ENCODE measurements at regions of chr6 and their contacts with region 1.

Region 1: GRCh38 chr6:46090115-46091079 is 39.4 kb upstream of the ENPP4 start:
- DNase-seq: peak; percentile 50
- ATAC-seq: peak; percentile 67
- H3K4me3 Mint-ChIP-seq: no peak overlapping the region
- H3K27ac Mint-ChIP-seq: no peak overlapping the region
- H3K4me1 Mint-ChIP-seq: no peaks in the 10 kb centered on the region
- H3K27me3 Mint-ChIP-seq: peaks cover 3% of the 10 kb centered on the region; the same call in 1 of the 2 replicates
- CTCF ChIP-seq: peak; percentile 63

Region 2: GRCh38 chr6:46011241-46012085 is 78.9 kb before region 1 on chr6:
- CTCF ChIA-PET with region 1: no interaction called
- POLR2A ChIA-PET with region 1: no interaction called
- DNase-seq: no peak
- ATAC-seq: no peak
- H3K4me3 Mint-ChIP-seq: no peak overlapping the region
- H3K27ac Mint-ChIP-seq: no peak overlapping the region
- H3K4me1 Mint-ChIP-seq: peaks cover 34% of the 10 kb centered on the region
- H3K27me3 Mint-ChIP-seq: peaks cover 23% of the 10 kb centered on the region
- CTCF ChIP-seq: no peak

Region 3: GRCh38 chr6:46221222-46221793 is 130.9 kb after region 1 on chr6:
- CTCF ChIA-PET with region 1: interaction called, 11 read pairs
- POLR2A ChIA-PET with region 1: no interaction called
- DNase-seq: no peak
- ATAC-seq: peak; percentile 81
- H3K4me3 Mint-ChIP-seq: no peak overlapping the region
- H3K27ac Mint-ChIP-seq: no peak overlapping the region
- H3K4me1 Mint-ChIP-seq: peaks cover 8% of the 10 kb centered on the region
- H3K27me3 Mint-ChIP-seq: peaks cover 11% of the 10 kb centered on the region
- CTCF ChIP-seq: peak; percentile 36; the same call in 1 of the 2 replicates

Region 4: GRCh38 chr6:46410334-46410953 is 320.0 kb after region 1 on chr6:
- CTCF ChIA-PET with region 1: interaction called, 17 read pairs
- POLR2A ChIA-PET with region 1: no interaction called
- DNase-seq: no peak
- ATAC-seq: no peak
- H3K4me3 Mint-ChIP-seq: no peak overlapping the region
- H3K27ac Mint-ChIP-seq: no peak overlapping the region
- H3K4me1 Mint-ChIP-seq: peaks cover 4% of the 10 kb centered on the region
- H3K27me3 Mint-ChIP-seq: no peaks in the 10 kb centered on the region
- CTCF ChIP-seq: peak; percentile 30; the same call in 1 of the 2 replicates

Measured in WTC11 (cell line).